ENCODE measurements at regions of chr1 and their contacts with region 1.

Region 1: DNA sequence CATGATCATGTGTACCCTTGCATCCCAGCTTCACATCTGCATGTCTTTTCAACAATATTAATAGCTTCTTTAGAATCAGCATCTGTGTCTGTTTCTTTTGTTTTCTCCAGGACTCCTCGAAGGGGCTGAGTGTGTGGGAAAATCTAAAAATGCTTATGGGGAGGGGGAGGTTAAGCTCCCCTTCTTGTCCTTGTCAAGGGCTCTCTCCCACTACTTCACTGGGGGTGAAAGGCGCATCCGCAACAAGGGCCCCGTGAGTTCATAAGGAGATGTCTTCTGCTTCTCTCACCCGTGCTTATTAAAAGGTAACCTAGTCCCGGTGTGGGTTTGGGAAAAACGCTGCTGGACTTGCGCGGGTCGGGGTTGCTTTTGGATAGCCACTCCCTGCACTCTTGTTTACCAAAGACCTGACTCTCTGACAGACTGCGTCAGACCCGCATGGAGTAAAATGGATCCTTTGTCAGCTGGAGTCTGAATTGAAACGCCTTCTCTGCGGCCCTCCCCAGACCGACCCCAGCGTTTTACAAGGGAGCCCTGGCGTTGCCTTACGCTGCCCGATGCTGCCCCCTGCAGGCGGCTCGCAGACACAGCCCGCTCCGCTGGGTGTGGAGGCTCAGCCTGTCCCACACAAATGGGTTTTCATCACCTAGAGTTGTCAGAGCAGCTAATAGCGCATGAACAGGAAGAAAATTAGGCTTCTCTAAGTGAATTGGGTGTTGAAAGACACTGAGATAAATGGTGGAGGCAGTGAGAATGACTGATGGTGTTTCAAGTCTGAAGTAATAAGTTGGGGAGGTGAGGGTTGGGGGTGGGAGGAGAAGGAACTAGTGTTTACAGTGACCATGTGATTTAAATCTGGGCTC is 53.8 kb downstream of the IER5 start:
- DNase-seq: no peak
- H3K4me3 ChIP-seq: peak overlapping the region in 3 of 4 donors; percentile 24 to 56 (median 33)
- H3K27ac ChIP-seq: peak overlapping the region; percentile 40 to 66 (median 48)
- H3K4me1 ChIP-seq: peaks cover 23 to 45% (median 25%) of the 10 kb centered on the region in 3 donors
- H3K27me3 ChIP-seq: no peaks in the 10 kb centered on the region
- CTCF ChIP-seq: peak; percentile 93 to 99 (median 98)
- POLR2A ChIP-seq: no peak

Region 2: DNA sequence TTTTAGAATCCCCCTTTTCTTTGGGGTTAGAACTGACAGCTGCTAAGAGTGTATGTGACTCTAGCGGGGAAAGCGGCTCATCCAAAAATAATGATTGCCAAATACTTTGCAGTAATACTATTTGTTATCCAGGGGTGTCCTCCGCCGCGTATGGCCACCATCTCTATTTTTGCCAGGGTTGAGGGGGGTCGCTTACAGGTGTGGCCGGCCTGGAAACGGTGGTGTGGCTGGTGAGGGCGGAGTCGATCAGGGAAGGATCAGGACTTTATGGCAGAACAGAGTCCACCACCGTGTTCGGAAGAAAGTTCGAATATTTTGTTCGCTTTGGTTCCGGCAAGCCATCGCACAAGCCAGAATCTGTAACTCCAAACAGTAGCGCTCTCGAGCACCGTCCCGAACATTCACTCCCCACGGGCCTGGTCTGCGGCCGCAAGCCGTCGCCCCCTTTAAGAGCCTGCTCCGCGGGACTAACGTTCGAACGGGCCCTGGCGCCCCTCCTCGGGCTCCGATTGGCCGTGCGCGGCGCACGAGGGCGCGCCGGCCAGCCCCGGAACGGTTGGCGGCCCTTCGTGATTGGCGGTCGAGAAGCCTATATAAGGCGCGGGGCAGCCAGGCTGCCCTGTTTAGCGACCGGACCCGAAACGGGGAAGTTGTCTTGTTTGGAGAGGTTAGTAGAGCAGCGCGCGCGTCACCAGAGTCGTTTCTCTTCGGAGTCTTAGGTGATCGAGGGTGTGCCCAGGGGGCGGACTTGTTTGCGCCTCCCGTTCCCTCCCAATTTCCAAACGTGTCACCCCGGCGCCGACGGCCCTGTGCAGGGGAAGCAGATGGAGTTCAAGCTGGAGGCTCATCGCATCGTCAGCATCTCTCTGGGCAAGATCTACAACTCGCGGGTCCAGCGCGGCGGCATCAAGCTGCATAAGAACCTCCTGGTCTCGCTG is 54.0 kb before region 1 on chr1 and contains the start of gene IER5:
- intact Hi-C with region 1: loop called (anchors 5 kb)
- DNase-seq: peak; percentile 91
- H3K4me3 ChIP-seq: peak within 1 kb of the TSS; percentile 72 to 97 (median 84)
- H3K27ac ChIP-seq: peak within 1 kb of the TSS; percentile 92 to 98 (median 96)
- H3K4me1 ChIP-seq: peaks cover 17 to 58% (median 17%) of the 10 kb centered on the region in 3 donors
- H3K27me3 ChIP-seq: no peaks in the 10 kb centered on the region
- CTCF ChIP-seq: peak in 1 of 6 experiments; percentile 16
- POLR2A ChIP-seq: peak in 3 of 4 donors; percentile 93 to 100 (median 99)
- total RNA-seq, gene IER5: 21.6 to 40.6 (median 26.5) TPM

Measured in esophagus squamous epithelium (tissue), 5 donors.